Tibial artery (tissue), 4 donors: ENCODE measurements at regions of chr6 and their contacts with region 1.

Region 1: DNA sequence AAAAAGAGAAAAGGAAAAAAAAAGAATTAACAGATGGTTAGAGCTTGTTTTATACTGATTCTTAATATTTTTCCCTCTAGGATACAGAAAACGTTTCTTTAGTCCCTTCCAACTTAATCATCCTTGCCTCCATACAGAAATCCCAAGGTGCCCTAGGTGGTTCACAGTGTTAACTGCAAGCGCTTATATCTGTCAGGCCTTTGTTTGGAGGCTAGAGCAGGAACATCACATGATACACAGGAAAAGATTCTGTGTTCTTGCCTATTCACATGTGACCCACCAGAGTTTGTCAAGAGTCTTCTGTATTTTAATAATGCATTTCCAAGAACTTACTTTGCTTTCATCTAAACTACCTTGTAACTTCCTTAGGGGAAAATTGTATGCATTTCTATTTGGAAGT is 31.3 kb downstream of the ANKRD6 start:
- DNase-seq: no peak
- H3K4me3 ChIP-seq: no peak overlapping the region
- H3K27ac ChIP-seq: no peak overlapping the region
- H3K4me1 ChIP-seq: peaks cover 0 to 10% (median 2%) of the 10 kb centered on the region in 4 donors
- H3K27me3 ChIP-seq: no peaks in the 10 kb centered on the region
- CTCF ChIP-seq: no peak

Region 2: GRCh38 chr6:89432875-89433251 is 31.4 kb before region 1 on chr6 and contains the start of gene ANKRD6:
- intact Hi-C with region 1: no loop called
- DNase-seq: peak; percentile 76 to 81
- H3K4me3 ChIP-seq: peak within 1 kb of the TSS; percentile 76 to 94
- H3K27ac ChIP-seq: peak within 1 kb of the TSS; percentile 76 to 79
- H3K4me1 ChIP-seq: peaks cover 0 to 23% (median 9%) of the 10 kb centered on the region in 4 donors
- H3K27me3 ChIP-seq: no peaks in the 10 kb centered on the region
- CTCF ChIP-seq: peak; percentile 83 to 98

Region 3: GRCh38 chr6:89819336-89820130 is 355.2 kb after region 1 on chr6 and contains the start of gene MDN1:
- intact Hi-C with region 1: loop called (anchors 10 kb)
- DNase-seq: peak; percentile 85 to 94
- H3K4me3 ChIP-seq: peak within 1 kb of the TSS; percentile 82
- H3K27ac ChIP-seq: peak within 1 kb of the TSS; percentile 72 to 84
- H3K4me1 ChIP-seq: peaks cover 0 to 26% (median 16%) of the 10 kb centered on the region in 4 donors
- H3K27me3 ChIP-seq: no peaks in the 10 kb centered on the region
- CTCF ChIP-seq: no peak